ENCODE measurements at regions of chr18 and their contacts with region 1.

Region 1: GRCh38 chr18:24734058-24734457 is 273.6 kb downstream of the HRH4 start:
- DNase-seq: no peak
- ATAC-seq: no peak
- H3K4me3 ChIP-seq: no peak overlapping the region
- H3K27ac ChIP-seq: no peak overlapping the region
- H3K4me1 ChIP-seq: no peaks in the 10 kb centered on the region
- H3K27me3 ChIP-seq: no peaks in the 10 kb centered on the region; a peak in 1 of 4 replicates
- CTCF ChIP-seq: peak in 1 of 3 experiments; percentile 13; a peak in 1 of 6 replicates
- EP300 ChIP-seq: no peak
- POLR2A ChIP-seq: no peak
- RAD21 ChIP-seq: no peak

Region 2: DNA sequence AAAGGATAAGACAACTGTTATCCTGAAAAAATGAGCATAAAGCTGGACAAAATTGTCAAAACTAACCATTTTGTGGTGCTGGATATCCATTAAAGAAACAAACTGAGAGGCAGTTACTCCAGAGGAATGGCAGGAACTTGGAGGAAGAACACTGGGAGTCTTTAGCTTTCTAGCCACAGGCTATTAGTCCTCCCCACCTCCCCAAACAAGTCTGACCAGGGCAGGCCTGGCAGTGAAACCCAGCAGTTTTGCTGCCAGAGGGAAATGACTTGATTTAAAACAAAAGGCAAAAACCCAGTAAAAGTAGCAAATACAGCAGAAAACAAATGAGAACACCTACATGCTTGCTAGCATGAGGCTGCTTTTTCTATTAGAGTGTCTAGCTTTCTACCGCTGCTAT is 371.3 kb before region 1 on chr18:
- CTCF ChIA-PET with region 1: interaction called, 5 read pairs
- POLR2A ChIA-PET with region 1: no interaction called
- RAD21 ChIA-PET with region 1: interaction called, 5 read pairs
- SMC1A ChIA-PET with region 1: no interaction called
- in situ Hi-C with region 1: loop called (anchors 5 kb)
- intact Hi-C with region 1: no loop called
- DNase-seq: no peak
- ATAC-seq: no peak
- H3K4me3 ChIP-seq: no peak overlapping the region
- H3K27ac ChIP-seq: no peak overlapping the region
- H3K4me1 ChIP-seq: no peaks in the 10 kb centered on the region
- H3K27me3 ChIP-seq: 0 out of 4 replicates have a peak, but pooled peaks cover 0 to 2% of the 10 kb centered on the region in 2 experiments
- CTCF ChIP-seq: no peak
- EP300 ChIP-seq: no peak
- POLR2A ChIP-seq: no peak
- RAD21 ChIP-seq: no peak

Region 3: DNA sequence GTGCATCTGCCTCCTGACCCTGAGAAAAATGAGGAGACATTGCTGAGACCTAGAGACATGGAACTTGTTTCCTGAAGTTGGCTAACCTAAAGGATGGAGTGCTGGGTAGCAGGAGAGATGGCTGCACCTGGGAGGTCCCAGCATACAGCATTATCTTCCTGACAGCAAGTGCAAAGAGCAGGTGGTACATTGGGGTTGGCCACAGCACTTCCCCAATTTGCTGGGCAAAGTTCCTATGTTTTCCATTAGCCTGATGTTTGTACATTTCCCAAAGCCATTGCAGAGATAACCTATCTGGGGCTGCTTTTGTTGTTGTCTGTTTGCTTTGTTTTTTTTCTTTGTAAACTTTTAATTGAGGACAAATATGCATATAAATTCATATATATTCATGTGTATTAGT is 23.1 kb after region 1 on chr18:
- CTCF ChIA-PET with region 1: no interaction called
- POLR2A ChIA-PET with region 1: no interaction called
- RAD21 ChIA-PET with region 1: no interaction called
- SMC1A ChIA-PET with region 1: no interaction called
- in situ Hi-C with region 1: no loop called
- intact Hi-C with region 1: no loop called
- DNase-seq: no peak
- ATAC-seq: no peak
- H3K4me3 ChIP-seq: no peak overlapping the region
- H3K27ac ChIP-seq: no peak overlapping the region
- H3K4me1 ChIP-seq: no peaks in the 10 kb centered on the region
- H3K27me3 ChIP-seq: no peaks in the 10 kb centered on the region
- CTCF ChIP-seq: no peak
- EP300 ChIP-seq: no peak
- POLR2A ChIP-seq: no peak
- RAD21 ChIP-seq: no peak